ENCODE measurements at regions of chr22 and their contacts with region 1.

Region 1: DNA sequence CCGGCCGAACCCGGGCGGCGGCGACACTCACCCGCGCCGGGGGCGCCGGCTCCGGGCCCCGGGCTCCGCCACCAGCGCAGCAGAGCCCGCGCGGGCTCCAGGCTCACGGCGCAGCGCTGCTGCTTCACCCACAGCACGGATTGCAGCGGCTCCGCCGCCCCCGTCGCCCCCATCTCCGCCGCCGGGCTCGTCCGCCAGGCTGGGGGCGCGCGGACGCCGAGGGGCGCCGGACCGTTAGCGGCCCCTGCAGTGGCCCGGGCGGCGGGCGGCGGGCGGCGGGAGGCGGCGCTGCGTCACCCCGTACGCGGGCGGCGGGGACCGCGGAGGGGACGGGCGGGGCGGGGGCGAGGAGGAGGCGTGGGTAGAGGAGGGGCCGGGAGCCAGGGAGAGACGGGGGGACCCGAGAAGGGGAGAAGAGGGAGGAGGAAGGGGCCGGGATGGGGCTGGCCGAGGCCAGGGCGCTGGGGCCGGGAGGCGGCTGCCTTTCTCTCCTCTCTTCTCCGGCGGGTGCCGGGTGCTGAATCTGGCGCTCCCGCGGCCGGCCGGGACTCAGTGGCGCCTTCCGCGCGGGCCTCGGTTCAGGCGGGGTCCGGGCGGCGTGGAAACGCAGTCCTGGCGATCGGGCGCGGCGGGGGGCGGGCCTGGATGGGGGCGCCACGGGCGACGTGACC is at the start of gene CERK:
- DNase-seq: peak; percentile 81 to 91
- ATAC-seq: peak; percentile 69 to 89 (median 74)
- H3K4me3 ChIP-seq: peak within 1 kb of the TSS; percentile 57 to 99 (median 92)
- H3K27ac ChIP-seq: peak within 1 kb of the TSS; percentile 96 to 99 (median 98)
- H3K4me1 ChIP-seq: peaks cover 28 to 83% (median 70%) of the 10 kb centered on the region in 9 donors
- H3K27me3 ChIP-seq: no peaks in the 10 kb centered on the region
- CTCF ChIP-seq: no peak
- total RNA-seq, gene CERK: 50.9 to 97.0 (median 74.2) TPM

Region 2: DNA sequence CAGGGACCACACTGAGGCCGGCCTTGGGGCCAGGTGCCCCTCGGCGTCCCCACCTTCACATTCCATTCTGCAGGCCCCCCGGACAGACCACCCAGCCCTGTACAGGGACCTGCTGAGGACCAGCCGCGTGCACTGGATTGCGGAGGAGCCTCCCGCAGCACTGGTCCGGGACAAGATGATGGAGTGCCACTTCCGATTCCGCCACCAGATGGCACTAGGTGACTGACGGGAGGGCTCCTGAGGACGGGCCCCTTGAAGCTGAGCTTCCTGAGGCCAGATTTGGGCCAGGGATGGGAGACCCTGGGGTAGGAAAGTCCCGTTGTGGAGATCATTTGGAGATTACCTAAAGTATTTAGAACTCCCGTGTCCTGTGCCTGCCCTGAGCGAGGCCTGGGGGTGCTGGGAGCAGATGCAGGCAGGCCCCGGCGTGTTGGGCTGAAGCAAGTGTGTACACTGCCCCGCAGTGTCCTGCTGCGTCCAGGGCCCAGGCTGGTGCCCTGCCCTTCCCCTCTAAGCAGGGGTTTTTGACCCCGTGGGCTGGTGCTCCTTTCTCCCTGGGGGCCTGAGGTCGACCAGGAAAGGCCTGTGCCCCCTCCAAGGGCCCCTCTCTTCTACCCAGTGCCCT is 382.6 kb before region 1 on chr22:
- intact Hi-C with region 1: loop called in 1 of 10 experiments (anchors 10 kb)
- DNase-seq: peak; percentile 57 to 70
- ATAC-seq: peak in 7 of 8 donors; percentile 18 to 57 (median 38)
- H3K4me3 ChIP-seq: no peak overlapping the region
- H3K27ac ChIP-seq: peak overlapping the region in 3 of 10 donors; percentile 23 to 44 (median 44)
- H3K4me1 ChIP-seq: peaks cover 3 to 41% (median 15%) of the 10 kb centered on the region in 9 donors
- H3K27me3 ChIP-seq: no peaks in the 10 kb centered on the region
- CTCF ChIP-seq: peak; percentile 38 to 82 (median 79)

Region 3: GRCh38 chr22:46415776-46416519 is 322.2 kb before region 1 on chr22:
- intact Hi-C with region 1: no loop called
- DNase-seq: no peak
- ATAC-seq: no peak
- H3K4me3 ChIP-seq: no peak overlapping the region
- H3K27ac ChIP-seq: no peak overlapping the region
- H3K4me1 ChIP-seq: peaks cover 10 to 22% (median 17%) of the 10 kb centered on the region in 9 donors
- H3K27me3 ChIP-seq: peaks cover 0 to 19% (median 0%) of the 10 kb centered on the region in 7 donors
- CTCF ChIP-seq: no peak